Naive thymus-derived CD4-positive, alpha-beta T cell (primary cell): ENCODE measurements at regions of chr4 and their contacts with region 1.

Region 1: GRCh38 chr4:36322921-36323354 is 41.5 kb downstream of the DTHD1 start:
- DNase-seq: peak in 8 of 9 donors; percentile 37 to 81 (median 66)
- ATAC-seq: peak; percentile 86
- H3K4me3 ChIP-seq: peak overlapping the region; percentile 6
- H3K4me3 Mint-ChIP-seq: peak overlapping the region in 9 of 10 donors; percentile 51 to 79 (median 65)
- H3K27ac ChIP-seq: no peak overlapping the region
- H3K27ac Mint-ChIP-seq: peak overlapping the region; percentile 44 to 87 (median 72)
- H3K4me1 ChIP-seq: peaks cover 24 to 37% of the 10 kb centered on the region in 2 donors
- H3K4me1 Mint-ChIP-seq: peaks cover 32 to 76% (median 41%) of the 10 kb centered on the region in 7 donors
- H3K27me3 ChIP-seq: no peaks in the 10 kb centered on the region
- H3K27me3 Mint-ChIP-seq: no peaks in the 10 kb centered on the region

Region 2: DNA sequence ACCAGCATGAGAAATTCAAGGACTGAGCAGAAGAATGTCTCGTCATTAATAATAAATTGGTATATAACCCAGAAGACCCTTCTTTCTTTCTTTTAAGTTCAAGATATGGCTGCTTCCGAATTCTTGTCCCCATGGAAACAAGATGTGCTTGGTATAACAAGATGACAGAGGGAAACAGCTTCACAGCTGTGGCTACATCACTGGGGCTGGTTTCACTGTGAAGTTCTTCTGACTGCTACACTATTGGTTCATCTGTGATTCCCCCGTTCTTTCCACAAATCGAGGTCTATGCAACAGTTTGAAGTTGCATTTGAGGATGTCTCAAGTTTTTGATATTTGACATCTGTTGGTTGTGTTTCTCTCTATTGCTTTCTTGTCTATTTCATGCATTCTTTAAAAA is 53.8 kb before region 1 on chr4:
- CTCF ChIA-PET with region 1: no interaction called
- POLR2A ChIA-PET with region 1: no interaction called
- intact Hi-C with region 1: loop called in 1 of 2 experiments (anchors 1 kb)
- DNase-seq: peak in 7 of 9 donors; percentile 27 to 66 (median 47)
- ATAC-seq: peak; percentile 96
- H3K4me3 ChIP-seq: no peak overlapping the region
- H3K4me3 Mint-ChIP-seq: no peak overlapping the region
- H3K27ac ChIP-seq: no peak overlapping the region
- H3K27ac Mint-ChIP-seq: peak overlapping the region in 8 of 9 donors; percentile 10 to 85 (median 52)
- H3K4me1 ChIP-seq: peaks cover 7 to 27% of the 10 kb centered on the region in 2 donors
- H3K4me1 Mint-ChIP-seq: peaks cover 2 to 46% (median 32%) of the 10 kb centered on the region in 7 donors
- H3K27me3 ChIP-seq: no peaks in the 10 kb centered on the region
- H3K27me3 Mint-ChIP-seq: peaks cover 0 to 3% (median 0%) of the 10 kb centered on the region in 5 donors

Region 3: GRCh38 chr4:36303426-36304137 is 19.4 kb before region 1 on chr4:
- CTCF ChIA-PET with region 1: no interaction called
- POLR2A ChIA-PET with region 1: no interaction called
- intact Hi-C with region 1: loop called in 1 of 2 experiments (anchors 2 kb)
- DNase-seq: no peak
- ATAC-seq: peak; percentile 64
- H3K4me3 ChIP-seq: no peak overlapping the region
- H3K4me3 Mint-ChIP-seq: peak overlapping the region in 1 of 10 donors; percentile 31
- H3K27ac ChIP-seq: no peak overlapping the region
- H3K27ac Mint-ChIP-seq: peak overlapping the region in 1 of 9 donors; percentile 51
- H3K4me1 ChIP-seq: no peaks in the 10 kb centered on the region
- H3K4me1 Mint-ChIP-seq: peaks cover 0 to 20% (median 0%) of the 10 kb centered on the region in 7 donors
- H3K27me3 ChIP-seq: no peaks in the 10 kb centered on the region
- H3K27me3 Mint-ChIP-seq: peaks cover 0 to 9% (median 0%) of the 10 kb centered on the region in 5 donors

Region 4: GRCh38 chr4:36385951-36386571 is 63.1 kb after region 1 on chr4:
- CTCF ChIA-PET with region 1: no interaction called
- POLR2A ChIA-PET with region 1: no interaction called
- intact Hi-C with region 1: loop called in 1 of 2 experiments (anchors 1 kb)
- DNase-seq: peak; percentile 8 to 89 (median 82)
- ATAC-seq: peak; percentile 99
- H3K4me3 ChIP-seq: peak overlapping the region; percentile 29
- H3K4me3 Mint-ChIP-seq: peak overlapping the region; percentile 46 to 84 (median 70)
- H3K27ac ChIP-seq: peak overlapping the region; percentile 70
- H3K27ac Mint-ChIP-seq: peak overlapping the region; percentile 92 to 99 (median 94)
- H3K4me1 ChIP-seq: peaks cover 22% of the 10 kb centered on the region in 2 donors
- H3K4me1 Mint-ChIP-seq: peaks cover 19 to 51% (median 40%) of the 10 kb centered on the region in 7 donors
- H3K27me3 ChIP-seq: no peaks in the 10 kb centered on the region
- H3K27me3 Mint-ChIP-seq: peaks cover 0 to 11% (median 0%) of the 10 kb centered on the region in 5 donors

Region 5: DNA sequence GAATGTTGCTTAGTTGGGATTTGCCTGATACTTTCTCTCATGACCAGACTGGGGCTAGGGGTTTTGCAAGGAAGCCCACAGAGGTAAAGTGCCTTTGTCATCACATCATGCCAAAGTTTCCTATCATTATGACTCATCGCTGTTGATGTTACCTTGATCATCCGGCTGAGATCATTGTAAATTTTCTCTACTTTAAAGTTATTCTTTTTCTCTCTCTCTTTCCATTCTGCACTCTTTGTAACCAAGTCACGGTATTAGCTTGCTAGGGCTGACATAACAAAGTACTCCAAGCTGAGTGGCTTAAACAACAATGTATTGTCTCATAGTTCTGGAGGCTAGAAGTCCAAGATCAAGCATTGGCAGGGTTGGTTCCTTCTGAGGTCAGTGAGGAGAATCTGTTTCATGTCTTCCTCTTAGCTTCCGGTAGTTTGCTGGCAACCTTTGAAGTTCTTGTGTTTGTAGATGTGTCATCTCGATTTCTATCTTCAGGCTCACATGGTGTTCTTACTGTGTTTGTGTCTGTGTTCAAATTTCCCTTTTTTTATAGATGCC is 71.5 kb after region 1 on chr4:
- CTCF ChIA-PET with region 1: interaction called, 4 read pairs
- POLR2A ChIA-PET with region 1: no interaction called
- intact Hi-C with region 1: loop called in 1 of 2 experiments (anchors 1 kb)
- DNase-seq: peak in 8 of 9 donors; percentile 33 to 84 (median 71)
- ATAC-seq: peak; percentile 92
- H3K4me3 ChIP-seq: no peak overlapping the region
- H3K4me3 Mint-ChIP-seq: peak overlapping the region in 6 of 10 donors; percentile 27 to 76 (median 50)
- H3K27ac ChIP-seq: no peak overlapping the region
- H3K27ac Mint-ChIP-seq: peak overlapping the region; percentile 83 to 96 (median 88)
- H3K4me1 ChIP-seq: peaks cover 5 to 11% of the 10 kb centered on the region in 2 donors
- H3K4me1 Mint-ChIP-seq: peaks cover 0 to 24% (median 15%) of the 10 kb centered on the region in 7 donors
- H3K27me3 ChIP-seq: no peaks in the 10 kb centered on the region
- H3K27me3 Mint-ChIP-seq: peaks cover 0 to 14% (median 0%) of the 10 kb centered on the region in 5 donors

Region 6: DNA sequence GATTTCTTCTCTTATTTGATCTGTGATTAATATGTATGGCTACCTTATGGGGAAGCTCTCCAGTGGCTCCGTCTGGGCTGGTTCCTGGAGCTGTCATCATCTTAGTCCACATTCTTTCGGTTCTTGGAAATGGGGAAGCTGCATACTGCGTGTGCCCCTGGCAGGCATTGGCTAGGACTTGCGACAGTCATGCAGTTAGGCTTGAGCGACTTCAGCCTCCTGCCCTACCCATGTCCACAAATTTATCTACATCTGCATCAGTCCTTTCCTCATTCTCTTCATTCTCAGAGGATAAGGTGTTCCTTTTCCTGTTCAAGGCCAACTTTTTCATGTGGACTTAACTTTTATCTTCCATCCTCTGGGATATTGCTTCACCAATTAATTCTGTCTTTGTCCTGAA is 1149.0 kb after region 1 on chr4:
- CTCF ChIA-PET with region 1: no interaction called
- POLR2A ChIA-PET with region 1: no interaction called
- intact Hi-C with region 1: no loop called
- DNase-seq: no peak
- ATAC-seq: peak; percentile 64
- H3K4me3 ChIP-seq: no peak overlapping the region
- H3K4me3 Mint-ChIP-seq: no peak overlapping the region
- H3K27ac ChIP-seq: no peak overlapping the region
- H3K27ac Mint-ChIP-seq: no peak overlapping the region
- H3K4me1 ChIP-seq: no peaks in the 10 kb centered on the region
- H3K4me1 Mint-ChIP-seq: no peaks in the 10 kb centered on the region
- H3K27me3 ChIP-seq: no peaks in the 10 kb centered on the region
- H3K27me3 Mint-ChIP-seq: peaks cover 14 to 37% (median 30%) of the 10 kb centered on the region in 5 donors